Dorsolateral prefrontal cortex (tissue), 120 donors: ENCODE measurements at regions of chr2 and their contacts with region 1.

Region 1: DNA sequence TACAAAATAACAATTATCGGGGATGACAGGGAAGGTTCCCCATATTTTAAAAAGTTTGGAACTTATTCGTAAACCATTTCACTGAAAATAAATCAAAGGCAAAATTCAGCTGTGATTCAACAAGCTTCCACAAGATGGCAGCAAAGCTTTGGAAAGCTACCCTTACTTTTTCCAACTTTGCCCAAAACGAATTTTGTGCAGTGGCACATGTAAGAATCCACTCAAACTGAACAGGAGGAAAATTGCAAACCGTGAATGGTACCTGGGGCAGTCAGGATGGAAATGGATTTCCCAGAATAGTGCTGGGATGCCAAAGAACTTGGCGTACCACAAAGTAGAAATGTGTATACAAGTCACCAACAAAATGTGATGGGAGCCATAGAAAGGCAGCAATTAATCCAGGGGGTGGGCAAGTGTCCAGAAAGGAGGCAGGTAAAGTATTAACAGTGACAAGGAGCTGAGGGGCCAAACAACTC is 10.7 kb downstream of the RPL31 start:
- DNase-seq: peak in 2 of 10 donors; percentile 23 to 32
- H3K4me3 ChIP-seq: no peak overlapping the region
- H3K27ac ChIP-seq: no peak overlapping the region
- H3K27me3 ChIP-seq: no peaks in the 10 kb centered on the region
- CTCF ChIP-seq: peak; percentile 76 to 98 (median 89)

Region 2: DNA sequence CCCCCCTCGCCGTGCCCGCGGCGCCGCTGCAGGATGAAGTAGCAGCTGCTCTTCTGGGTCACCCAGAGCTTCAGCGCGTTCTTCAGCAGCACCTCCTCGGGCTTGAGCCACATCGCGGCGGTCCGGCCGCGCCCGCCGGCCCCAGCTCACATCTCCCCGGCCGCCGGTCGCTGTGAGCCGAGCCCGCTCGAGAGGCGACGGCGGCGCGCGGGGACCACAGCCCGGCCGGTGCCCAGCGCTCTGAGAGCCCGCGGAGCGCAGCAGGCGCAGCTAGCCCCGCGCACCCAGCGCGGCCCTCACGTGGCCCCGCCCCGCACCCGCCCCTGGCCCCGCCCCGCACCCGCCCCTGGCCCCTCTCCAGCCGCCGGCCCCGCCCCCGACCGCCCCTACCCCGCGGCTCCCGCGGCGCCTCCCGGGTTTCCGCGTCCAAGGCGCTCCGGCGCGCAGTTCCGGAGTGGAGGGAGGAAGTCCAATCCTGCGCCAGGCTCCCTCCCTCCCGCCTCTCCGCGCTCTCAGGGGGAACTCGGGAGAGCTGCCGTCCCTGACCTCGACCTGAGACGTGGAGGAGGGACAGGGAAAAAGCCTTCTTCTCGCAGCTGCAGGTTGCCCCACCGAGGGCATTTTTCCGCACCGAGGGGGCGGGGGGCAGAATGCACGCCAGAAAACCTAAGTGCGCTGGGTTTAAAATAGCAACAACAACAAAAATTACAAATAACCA is 138.6 kb after region 1 on chr2 and contains the start of gene TBC1D8:
- intact Hi-C with region 1: loop called (anchors 1 to 2 kb)
- DNase-seq: peak; percentile 55 to 86 (median 74)
- H3K4me3 ChIP-seq: peak within 1 kb of the TSS; percentile 51 to 85 (median 72)
- H3K27ac ChIP-seq: peak within 1 kb of the TSS in 56 of 59 donors; percentile 13 to 90 (median 75)
- H3K27me3 ChIP-seq: no peaks in the 10 kb centered on the region
- CTCF ChIP-seq: peak in 9 of 56 donors; percentile 0 to 24 (median 14)
- total RNA-seq, gene TBC1D8: 10.5 to 33.3 (median 21.0) TPM

Region 3: GRCh38 chr2:101205521-101205998 is 192.8 kb after region 1 on chr2:
- intact Hi-C with region 1: loop called (anchors 1 to 5 kb)
- DNase-seq: peak in 8 of 10 donors; percentile 39 to 67 (median 50)
- H3K4me3 ChIP-seq: peak overlapping the region in 54 of 59 donors; percentile 1 to 59 (median 39)
- H3K27ac ChIP-seq: peak overlapping the region in 4 of 59 donors; percentile 2 to 44 (median 32)
- H3K27me3 ChIP-seq: no peaks in the 10 kb centered on the region
- CTCF ChIP-seq: peak; percentile 26 to 81 (median 60)